ENCODE measurements at regions of chr5 and their contacts with region 1.

Region 1: GRCh38 chr5:56140073-56140472 is 93.1 kb downstream of the ANKRD55 start:
- DNase-seq: peak; percentile 90
- H3K4me3 ChIP-seq: peak overlapping the region in 1 of 3 experiments; percentile 35
- H3K27ac ChIP-seq: peak overlapping the region; percentile 98
- H3K4me1 ChIP-seq: peaks cover 14% of the 10 kb centered on the region
- H3K27me3 ChIP-seq: no peaks in the 10 kb centered on the region
- CTCF ChIP-seq: no peak
- POLR2A ChIP-seq: no peak

Region 2: GRCh38 chr5:56099346-56099745 is 40.7 kb before region 1 on chr5:
- CTCF ChIA-PET with region 1: no interaction called
- POLR2A ChIA-PET with region 1: no interaction called
- dilution Hi-C with region 1: no loop called
- intact Hi-C with region 1: loop called (anchors 1 kb)
- DNase-seq: peak; percentile 96
- H3K4me3 ChIP-seq: no peak overlapping the region
- H3K27ac ChIP-seq: no peak overlapping the region
- H3K4me1 ChIP-seq: peaks cover 26% of the 10 kb centered on the region
- H3K27me3 ChIP-seq: no peaks in the 10 kb centered on the region
- CTCF ChIP-seq: no peak
- POLR2A ChIP-seq: no peak

Region 3: GRCh38 chr5:56112526-56113121 is 27.4 kb before region 1 on chr5:
- CTCF ChIA-PET with region 1: no interaction called
- POLR2A ChIA-PET with region 1: no interaction called
- dilution Hi-C with region 1: no loop called
- intact Hi-C with region 1: no loop called
- DNase-seq: no peak
- H3K4me3 ChIP-seq: no peak overlapping the region
- H3K27ac ChIP-seq: no peak overlapping the region
- H3K4me1 ChIP-seq: peaks cover 14% of the 10 kb centered on the region
- H3K27me3 ChIP-seq: no peaks in the 10 kb centered on the region
- CTCF ChIP-seq: no peak
- POLR2A ChIP-seq: no peak

Region 4: GRCh38 chr5:56175488-56175887 is 35.4 kb after region 1 on chr5:
- CTCF ChIA-PET with region 1: interaction called, 4 read pairs
- POLR2A ChIA-PET with region 1: no interaction called
- dilution Hi-C with region 1: no loop called
- intact Hi-C with region 1: loop called (anchors 2 kb)
- DNase-seq: peak; percentile 81
- H3K4me3 ChIP-seq: no peak overlapping the region
- H3K27ac ChIP-seq: peak overlapping the region; percentile 47
- H3K4me1 ChIP-seq: peaks cover 35% of the 10 kb centered on the region
- H3K27me3 ChIP-seq: no peaks in the 10 kb centered on the region
- CTCF ChIP-seq: no peak
- POLR2A ChIP-seq: no peak

Region 5: DNA sequence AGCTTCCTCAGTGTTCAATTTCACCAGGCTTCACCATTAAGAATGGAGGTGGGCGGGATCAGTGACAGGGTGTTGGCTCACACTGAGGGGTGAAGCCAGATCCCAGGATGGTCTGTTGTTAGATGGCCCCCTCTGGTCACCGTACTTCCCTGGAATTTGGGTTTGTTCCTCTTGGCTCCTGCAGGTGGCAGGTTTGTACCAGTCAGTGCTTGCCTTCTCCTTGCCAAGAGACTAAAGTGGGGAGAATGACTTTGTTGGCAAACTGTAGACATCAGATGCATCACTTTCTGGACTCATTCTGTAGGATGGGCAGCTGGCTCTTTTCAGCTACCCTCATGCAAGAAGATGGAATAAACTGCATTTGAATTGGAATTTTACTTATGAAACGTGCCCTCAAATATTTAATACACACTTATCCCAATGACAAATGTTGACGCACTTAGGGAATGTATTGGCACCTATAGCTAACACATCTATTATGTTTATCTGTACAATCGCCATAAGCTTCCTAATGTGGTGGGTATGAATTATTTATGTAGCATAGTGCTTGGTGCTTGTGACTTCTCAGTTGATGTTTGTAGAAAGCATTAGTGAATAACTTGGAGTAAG is 124.4 kb after region 1 on chr5:
- CTCF ChIA-PET with region 1: no interaction called
- POLR2A ChIA-PET with region 1: no interaction called
- dilution Hi-C with region 1: no loop called
- intact Hi-C with region 1: no loop called
- DNase-seq: no peak
- H3K4me3 ChIP-seq: no peak overlapping the region
- H3K27ac ChIP-seq: no peak overlapping the region
- H3K4me1 ChIP-seq: no peaks in the 10 kb centered on the region
- H3K27me3 ChIP-seq: no peaks in the 10 kb centered on the region
- CTCF ChIP-seq: peak; percentile 45 to 54
- POLR2A ChIP-seq: no peak

Measured in endothelial cell of umbilical vein (primary cell).